ENCODE measurements at regions of chr15 and their contacts with region 1.

Region 1: DNA sequence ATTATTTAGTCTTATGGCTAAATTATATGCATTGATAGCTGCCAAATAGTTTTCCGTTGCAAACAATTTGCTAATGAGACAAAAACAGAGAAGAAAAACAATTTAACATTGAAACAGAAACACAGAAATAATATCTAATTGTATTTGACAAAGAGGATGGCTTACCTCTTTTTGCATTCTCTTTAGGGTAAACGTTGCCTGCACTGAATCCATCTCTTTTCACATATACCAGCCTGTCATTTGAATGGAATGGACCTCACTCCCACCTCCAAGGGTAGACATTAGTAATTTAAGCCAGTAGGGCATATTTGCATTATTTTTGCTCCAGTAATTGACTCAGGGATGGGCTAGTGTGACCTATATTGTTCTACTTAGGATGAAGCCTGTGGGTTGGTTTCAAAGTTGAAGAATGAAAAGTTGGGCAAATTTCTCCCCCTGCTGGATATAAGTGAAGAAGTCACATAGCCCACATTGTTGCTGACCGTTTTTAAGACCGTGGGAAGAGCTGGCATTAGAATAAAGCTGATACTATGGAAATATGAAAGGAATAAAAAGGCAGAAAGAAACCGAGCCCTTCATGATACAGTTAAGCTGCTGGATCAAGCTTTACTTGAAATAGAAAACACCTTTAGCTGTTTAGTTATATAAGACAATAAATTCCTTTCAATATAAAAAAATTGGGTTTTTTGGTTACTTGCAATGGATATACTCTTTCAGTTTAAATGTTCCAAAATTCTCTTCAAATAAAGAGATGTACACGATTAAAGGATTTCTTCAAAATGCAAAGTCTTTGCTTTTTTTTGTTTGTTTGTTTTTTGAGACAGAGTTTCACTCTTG is 26.9 kb downstream of the PIERCE2 start:
- DNase-seq: peak; percentile 64
- ATAC-seq: peak; percentile 93
- H3K4me3 ChIP-seq: no peak overlapping the region
- H3K27ac ChIP-seq: no peak overlapping the region
- H3K4me1 ChIP-seq: no peaks in the 10 kb centered on the region
- H3K27me3 ChIP-seq: no peaks in the 10 kb centered on the region
- CTCF ChIP-seq: peak; percentile 70
- POLR2A ChIP-seq: no peak
- RAD21 ChIP-seq: peak; percentile 68

Region 2: GRCh38 chr15:55279746-55280351 is 155.4 kb before region 1 on chr15:
- CTCF ChIA-PET with region 1: no interaction called
- POLR2A ChIA-PET with region 1: no interaction called
- dilution Hi-C with region 1: no loop called
- in situ Hi-C with region 1: no loop called
- intact Hi-C with region 1: no loop called
- DNase-seq: peak; percentile 95
- ATAC-seq: peak; percentile 66
- H3K4me3 ChIP-seq: no peak overlapping the region
- H3K27ac ChIP-seq: no peak overlapping the region
- H3K4me1 ChIP-seq: peaks cover 13% of the 10 kb centered on the region
- H3K27me3 ChIP-seq: no peaks in the 10 kb centered on the region
- CTCF ChIP-seq: no peak
- POLR2A ChIP-seq: no peak
- RAD21 ChIP-seq: no peak

Region 3: DNA sequence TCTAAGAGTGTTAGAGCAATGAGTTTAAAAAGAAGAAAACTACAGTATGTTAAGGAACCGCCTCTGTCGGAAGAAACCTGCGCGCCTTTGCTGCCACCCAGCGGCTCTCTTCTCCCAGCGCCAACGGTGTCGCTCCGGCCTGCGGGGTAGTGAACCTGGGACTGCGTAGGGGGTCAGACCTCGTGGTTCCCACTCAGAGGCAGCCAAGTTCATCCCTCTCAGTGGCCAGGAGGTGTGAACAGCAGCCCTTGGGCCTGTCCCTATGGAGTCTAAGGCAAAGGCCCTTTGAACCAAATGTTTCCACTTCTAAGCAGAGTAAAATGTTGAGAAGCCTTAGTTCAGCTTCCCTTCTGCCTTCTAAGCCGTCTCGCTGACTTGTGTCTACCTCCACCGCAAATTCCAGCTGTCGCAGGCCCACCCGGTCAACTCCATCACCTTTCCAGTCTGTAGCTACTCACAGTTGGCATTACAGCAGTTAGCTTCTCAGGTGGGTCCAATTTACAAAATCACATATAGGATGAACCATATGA is 144.6 kb before region 1 on chr15:
- CTCF ChIA-PET with region 1: interaction called, 3 read pairs
- POLR2A ChIA-PET with region 1: no interaction called
- dilution Hi-C with region 1: no loop called
- in situ Hi-C with region 1: loop called (anchors 10 kb)
- intact Hi-C with region 1: loop called (anchors 1 kb)
- DNase-seq: peak; percentile 70
- ATAC-seq: peak; percentile 91
- H3K4me3 ChIP-seq: peak overlapping the region; percentile 68
- H3K27ac ChIP-seq: no peak overlapping the region; the same call in 1 of the 2 replicates
- H3K4me1 ChIP-seq: no peaks in the 10 kb centered on the region
- H3K27me3 ChIP-seq: no peaks in the 10 kb centered on the region
- CTCF ChIP-seq: peak; percentile 96
- POLR2A ChIP-seq: no peak
- RAD21 ChIP-seq: peak; percentile 97

Region 4: GRCh38 chr15:55318588-55319494 is 116.4 kb before region 1 on chr15 and contains the starts of genes PIGB and PIGBOS1:
- CTCF ChIA-PET with region 1: interaction called, 5 read pairs
- POLR2A ChIA-PET with region 1: no interaction called
- dilution Hi-C with region 1: no loop called
- in situ Hi-C with region 1: no loop called
- intact Hi-C with region 1: loop called (anchors 2 kb)
- DNase-seq: peak; percentile 89
- ATAC-seq: peak; percentile 98
- H3K4me3 ChIP-seq: peak within 1 kb of the TSS; percentile 71
- H3K27ac ChIP-seq: peak within 1 kb of the TSS; percentile 94
- H3K4me1 ChIP-seq: peaks cover 2% of the 10 kb centered on the region; the same call in 1 of the 2 replicates
- H3K27me3 ChIP-seq: no peaks in the 10 kb centered on the region
- CTCF ChIP-seq: 0 out of 2 replicates have a peak, but pooled peaks have one; percentile 15
- POLR2A ChIP-seq: peak; percentile 66; the same call in 1 of the 2 replicates
- RAD21 ChIP-seq: peak; percentile 22; the same call in 1 of the 2 replicates
- total RNA-seq, gene PIGB: 11.8 and 17.5 TPM in 2 replicates
- total RNA-seq, gene PIGBOS1: 11.7 and 12.7 TPM in 2 replicates

Region 5: DNA sequence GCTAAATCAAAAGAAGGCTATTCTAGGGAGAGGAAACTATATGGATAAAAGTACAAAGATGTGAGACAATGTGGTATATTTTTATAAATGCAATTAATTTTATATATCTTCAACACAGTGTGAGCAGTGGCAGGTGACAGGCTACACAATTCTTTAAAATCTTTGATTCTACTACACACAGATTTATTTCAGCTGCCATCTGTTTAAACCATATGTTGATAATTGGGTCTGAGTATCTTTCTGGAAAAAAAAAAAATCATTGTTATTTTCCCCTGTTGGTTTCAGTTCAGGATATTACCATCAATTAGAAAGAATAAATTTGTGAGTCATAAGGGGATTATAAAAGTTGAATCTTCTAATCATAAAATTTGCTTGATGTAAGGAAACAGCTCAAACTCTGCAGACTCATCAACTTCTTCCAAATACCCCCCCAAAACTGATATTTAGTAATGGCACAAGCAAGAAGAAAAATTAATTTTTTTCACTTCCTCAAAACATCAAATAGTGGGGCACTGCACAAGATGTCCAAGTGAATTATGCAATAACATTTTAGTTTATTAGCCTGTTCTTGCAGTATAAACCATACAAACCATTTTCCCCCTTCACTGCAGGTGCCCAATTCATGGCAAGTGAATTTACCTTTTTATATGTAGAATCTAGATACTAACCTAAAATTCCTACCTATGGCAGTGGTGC is 14.9 kb before region 1 on chr15:
- CTCF ChIA-PET with region 1: interaction called, 12 read pairs
- POLR2A ChIA-PET with region 1: no interaction called
- dilution Hi-C with region 1: no loop called
- in situ Hi-C with region 1: no loop called
- intact Hi-C with region 1: no loop called
- DNase-seq: no peak
- ATAC-seq: no peak
- H3K4me3 ChIP-seq: no peak overlapping the region
- H3K27ac ChIP-seq: no peak overlapping the region
- H3K4me1 ChIP-seq: no peaks in the 10 kb centered on the region
- H3K27me3 ChIP-seq: no peaks in the 10 kb centered on the region
- CTCF ChIP-seq: no peak
- POLR2A ChIP-seq: no peak
- RAD21 ChIP-seq: no peak